Right ventricle myocardium superior (tissue), 1 donor: ENCODE measurements at regions of chr2 and their contacts with region 1.

Region 1: DNA sequence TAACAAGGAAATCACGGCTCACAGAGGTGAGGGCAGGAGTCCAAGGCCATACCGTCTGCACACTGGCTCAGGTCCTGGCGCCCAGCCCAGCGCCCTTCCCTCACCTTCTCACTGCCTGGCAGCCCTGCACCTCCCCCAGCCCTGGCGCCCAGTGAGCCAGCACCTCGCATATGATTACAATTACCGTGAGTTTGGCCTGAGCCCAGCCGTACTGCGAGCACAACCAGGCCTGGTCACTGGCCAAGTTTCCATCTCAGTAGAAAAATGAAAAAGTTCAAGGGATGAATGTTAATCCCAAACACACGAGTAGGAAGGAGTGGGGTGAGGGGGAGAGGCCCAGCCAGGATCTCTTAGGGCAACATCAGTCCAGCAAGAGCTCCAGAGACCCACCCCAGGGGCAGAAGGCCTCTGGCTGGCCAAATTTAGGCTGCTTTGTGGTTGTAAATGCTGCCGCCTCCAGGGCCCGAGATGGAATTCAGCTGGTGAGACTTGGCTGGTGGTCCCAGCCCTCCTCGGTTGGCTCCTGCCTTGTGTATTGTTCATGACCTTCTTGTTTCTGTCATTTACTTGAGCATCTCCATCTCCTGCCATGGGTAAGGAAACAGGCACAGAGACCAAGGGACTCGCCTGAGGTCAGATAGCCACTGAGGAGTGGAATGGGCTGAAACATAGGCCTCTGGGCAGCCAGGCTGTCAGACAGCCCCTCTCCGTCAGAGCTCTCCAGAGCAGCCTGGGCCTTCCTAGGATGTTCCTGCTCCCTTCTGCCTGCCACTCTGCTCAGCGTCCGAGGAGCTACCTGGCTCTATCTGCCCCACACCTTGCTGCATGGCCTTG is 68.2 kb downstream of the MCFD2 start:
- DNase-seq: peak; percentile 95
- ATAC-seq: peak; percentile 85

Region 2: GRCh38 chr2:46812361-46813024 is 35.0 kb before region 1 on chr2:
- intact Hi-C with region 1: loop called (anchors 5 kb)
- DNase-seq: peak; percentile 80
- ATAC-seq: peak; percentile 30

Region 3: DNA sequence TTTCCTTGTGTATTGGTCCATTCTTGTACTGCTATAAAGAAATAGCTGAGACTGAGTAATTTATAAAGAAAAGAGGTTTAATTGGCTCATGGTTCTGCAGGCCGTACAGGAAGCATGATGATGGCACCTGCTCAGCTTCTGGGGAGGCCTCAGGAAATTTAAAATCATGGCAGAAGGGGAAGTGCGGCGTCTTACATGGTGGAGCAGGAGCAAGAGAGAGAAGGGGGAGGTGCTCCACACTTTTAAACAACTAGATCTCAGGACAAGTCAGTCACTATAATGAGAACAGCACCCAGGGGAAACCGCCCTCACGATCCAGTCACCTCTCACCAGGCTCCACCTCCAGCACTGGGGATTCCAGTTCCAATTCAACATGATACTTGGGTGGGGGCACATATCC is 609.8 kb after region 1 on chr2:
- intact Hi-C with region 1: no loop called
- DNase-seq: no peak
- ATAC-seq: no peak